H1 (cell line): ENCODE measurements at regions of chr11 and their contacts with region 1.

Region 1: DNA sequence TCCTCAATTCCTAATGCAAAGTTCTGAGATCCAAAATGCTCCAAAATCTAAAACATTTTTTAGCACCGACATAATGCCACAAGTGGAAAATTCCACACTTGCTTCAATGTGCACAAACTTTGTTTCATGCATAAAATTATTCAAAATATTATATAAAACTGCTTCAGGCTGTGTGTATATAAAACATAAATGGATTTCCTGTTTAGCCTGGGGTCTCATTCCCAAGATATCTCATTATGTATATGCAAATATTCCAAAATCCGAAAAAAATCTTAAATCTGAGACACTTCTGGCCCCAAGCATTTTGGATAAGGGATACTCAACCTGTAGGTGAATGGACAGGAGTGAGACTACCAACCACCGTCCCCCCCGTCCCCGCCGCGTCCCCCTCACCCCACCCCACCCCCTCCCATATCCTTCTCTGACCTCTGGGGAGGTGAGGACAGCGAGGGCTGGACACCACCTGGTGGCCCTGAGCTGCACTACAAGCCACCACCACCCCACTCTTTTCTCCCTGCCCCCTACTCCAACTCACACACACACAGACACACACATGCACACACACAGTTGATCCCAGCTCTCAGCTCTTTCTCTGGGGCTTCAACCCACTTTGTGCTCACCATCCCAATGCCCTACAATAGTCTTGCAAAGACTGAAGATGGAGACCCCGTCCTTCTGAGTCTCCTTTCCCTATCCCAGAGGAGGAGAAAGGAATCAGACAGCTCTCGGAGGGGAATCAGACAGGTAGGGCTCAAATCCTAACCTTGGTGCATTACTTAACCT is 101.0 kb downstream of the PDE2A start:
- DNase-seq: peak in 1 of 2 experiments; percentile 85
- H3K4me3 ChIP-seq: no peak overlapping the region
- H3K27ac ChIP-seq: no peak overlapping the region
- H3K4me1 ChIP-seq: no peaks in the 10 kb centered on the region
- H3K27me3 ChIP-seq: no peaks in the 10 kb centered on the region
- CTCF ChIP-seq: peak; percentile 78 to 94 (median 89)
- EP300 ChIP-seq: no peak
- POLR2A ChIP-seq: no peak
- RAD21 ChIP-seq: peak; percentile 77 to 81

Region 2: DNA sequence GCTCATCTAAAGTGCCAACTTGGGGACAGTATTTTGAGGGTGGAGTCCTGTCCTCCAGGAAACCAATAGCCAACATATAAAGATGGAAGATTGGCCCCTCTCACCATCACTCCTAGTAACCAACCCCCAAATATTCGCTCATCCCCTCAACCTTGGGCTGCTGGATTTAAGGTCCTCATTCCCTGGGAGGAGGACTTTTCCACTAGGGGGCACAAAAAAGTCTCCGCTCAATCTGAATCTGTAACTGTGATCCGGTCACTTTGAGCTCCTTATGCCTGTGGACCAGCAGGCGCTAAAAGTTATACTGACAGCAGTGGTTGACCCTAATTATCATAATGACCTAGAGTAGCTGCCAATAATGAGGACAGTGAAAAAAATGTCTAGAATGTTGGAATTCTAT is 118.5 kb before region 1 on chr11:
- CTCF ChIA-PET with region 1: interaction called, 26 read pairs
- POLR2A ChIA-PET with region 1: no interaction called
- DNase-seq: no peak
- H3K4me3 ChIP-seq: no peak overlapping the region
- H3K27ac ChIP-seq: no peak overlapping the region
- H3K4me1 ChIP-seq: no peaks in the 10 kb centered on the region
- H3K27me3 ChIP-seq: no peaks in the 10 kb centered on the region; a peak in 3 of 7 replicates
- CTCF ChIP-seq: peak; percentile 38 to 56 (median 43)
- EP300 ChIP-seq: no peak
- POLR2A ChIP-seq: no peak
- RAD21 ChIP-seq: peak; percentile 12 to 44; a peak in 2 of 4 replicates

Region 3: DNA sequence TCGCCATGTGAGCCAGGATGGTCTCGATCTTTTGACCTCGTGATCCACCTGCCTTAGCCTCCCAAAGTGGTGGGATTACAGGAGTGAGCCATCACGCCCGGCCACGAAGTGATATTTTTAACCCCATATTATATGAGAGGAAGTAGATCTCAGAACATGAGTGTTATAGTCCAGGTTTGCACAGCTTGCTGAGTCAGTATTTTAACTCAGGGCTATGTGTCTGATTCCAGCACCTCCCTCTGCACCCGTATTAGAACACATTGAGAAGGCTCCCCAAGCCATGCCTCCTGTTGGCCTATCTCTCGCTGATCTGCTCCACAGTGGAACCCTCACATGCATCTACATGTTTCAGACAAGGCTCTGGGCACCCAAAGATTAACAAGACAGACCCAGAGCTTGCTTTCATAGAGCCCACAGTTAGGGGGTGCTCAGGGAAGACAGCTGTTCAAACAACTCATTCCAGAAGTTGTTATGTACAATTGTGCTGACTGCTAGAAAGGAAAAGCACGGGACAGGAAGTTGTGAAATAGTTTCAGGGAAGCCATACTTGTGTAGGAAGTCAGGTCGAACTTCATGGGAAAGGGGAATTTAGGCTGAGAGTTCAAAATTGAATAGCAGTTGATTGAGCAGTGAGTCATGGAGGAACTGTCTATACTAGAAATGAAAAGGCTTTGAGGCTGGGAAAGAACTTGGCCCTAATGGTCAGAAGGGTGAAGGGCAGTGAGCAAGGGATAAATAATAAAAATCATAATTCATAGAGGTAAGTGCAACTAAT is 89.7 kb before region 1 on chr11:
- CTCF ChIA-PET with region 1: interaction called, 20 read pairs
- POLR2A ChIA-PET with region 1: interaction called, 3 read pairs
- DNase-seq: no peak
- H3K4me3 ChIP-seq: no peak overlapping the region
- H3K27ac ChIP-seq: no peak overlapping the region
- H3K4me1 ChIP-seq: no peaks in the 10 kb centered on the region
- H3K27me3 ChIP-seq: no peaks in the 10 kb centered on the region
- CTCF ChIP-seq: no peak
- EP300 ChIP-seq: no peak
- POLR2A ChIP-seq: no peak
- RAD21 ChIP-seq: no peak

Region 4: DNA sequence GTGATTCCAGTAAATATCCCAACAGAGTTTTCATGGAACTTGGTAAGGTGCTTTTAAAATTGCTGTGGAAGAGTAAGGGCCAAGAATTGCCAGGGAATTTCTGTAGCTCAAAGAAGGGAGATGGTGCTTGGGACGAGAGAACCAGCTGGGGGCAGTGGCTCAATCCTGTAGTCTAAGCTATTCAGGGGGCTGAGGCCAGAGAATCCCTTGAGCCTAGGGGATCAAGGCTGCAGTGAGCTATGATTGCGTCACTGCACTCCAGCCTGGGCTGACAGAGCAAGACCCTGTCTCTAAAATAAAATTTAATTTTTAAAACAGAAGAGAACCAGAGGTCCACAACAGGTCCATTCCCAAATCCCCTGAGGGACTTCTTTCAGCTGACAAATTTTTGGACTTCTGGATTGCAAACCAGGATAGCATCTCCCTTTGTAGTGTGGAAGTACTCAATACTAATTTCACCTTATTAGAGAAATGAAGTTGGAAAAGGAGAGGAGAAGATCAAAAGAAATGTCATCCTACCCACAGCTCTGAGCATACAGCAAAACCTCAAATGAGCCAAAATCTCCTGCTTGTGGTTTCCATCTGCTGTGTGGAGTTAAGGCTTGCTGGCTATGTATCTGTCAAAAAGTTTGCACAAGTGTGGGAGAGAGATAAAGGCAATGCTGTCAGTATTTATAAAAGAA is 79.7 kb before region 1 on chr11:
- CTCF ChIA-PET with region 1: interaction called, 14 read pairs
- POLR2A ChIA-PET with region 1: no interaction called
- DNase-seq: no peak
- H3K4me3 ChIP-seq: no peak overlapping the region
- H3K27ac ChIP-seq: no peak overlapping the region
- H3K4me1 ChIP-seq: no peaks in the 10 kb centered on the region
- H3K27me3 ChIP-seq: no peaks in the 10 kb centered on the region
- CTCF ChIP-seq: peak in 2 of 3 experiments; percentile 17 to 20; a peak in 1 of 4 replicates
- EP300 ChIP-seq: no peak
- POLR2A ChIP-seq: no peak
- RAD21 ChIP-seq: peak; percentile 23 to 40; a peak in 3 of 4 replicates

Region 5: GRCh38 chr11:72553706-72554105 is 19.6 kb before region 1 on chr11:
- CTCF ChIA-PET with region 1: interaction called, 23 read pairs
- POLR2A ChIA-PET with region 1: no interaction called
- DNase-seq: peak; percentile 25 to 74
- H3K4me3 ChIP-seq: no peak overlapping the region
- H3K27ac ChIP-seq: no peak overlapping the region
- H3K4me1 ChIP-seq: no peaks in the 10 kb centered on the region
- H3K27me3 ChIP-seq: no peaks in the 10 kb centered on the region
- CTCF ChIP-seq: peak; percentile 81 to 92 (median 84)
- EP300 ChIP-seq: no peak
- POLR2A ChIP-seq: no peak
- RAD21 ChIP-seq: peak; percentile 90 to 93

Region 6: DNA sequence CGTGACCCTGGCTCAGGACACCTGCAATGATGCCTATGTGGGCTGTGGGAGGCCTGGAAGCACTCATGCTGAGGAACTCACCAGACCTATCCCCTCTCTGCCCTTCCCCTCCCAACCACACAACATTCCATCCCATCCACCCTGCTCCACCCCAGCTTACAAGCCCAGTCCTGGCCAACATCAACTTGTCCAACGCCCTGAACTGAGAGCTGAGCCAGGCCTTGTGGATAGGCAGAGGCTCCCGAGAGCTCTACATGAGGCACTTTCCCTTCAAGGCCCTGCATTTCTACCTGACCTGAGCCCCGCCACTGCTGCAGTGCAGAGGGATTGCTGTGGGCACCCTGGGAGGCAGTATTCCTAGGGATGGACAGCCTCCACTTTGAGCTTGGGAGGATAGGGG is 11.4 kb before region 1 on chr11:
- CTCF ChIA-PET with region 1: interaction called, 10 read pairs
- POLR2A ChIA-PET with region 1: no interaction called
- DNase-seq: no peak
- H3K4me3 ChIP-seq: no peak overlapping the region
- H3K27ac ChIP-seq: no peak overlapping the region
- H3K4me1 ChIP-seq: no peaks in the 10 kb centered on the region
- H3K27me3 ChIP-seq: no peaks in the 10 kb centered on the region
- CTCF ChIP-seq: no peak
- EP300 ChIP-seq: no peak
- POLR2A ChIP-seq: no peak
- RAD21 ChIP-seq: no peak